ENCODE measurements at regions of chr17 and their contacts with region 1.

Region 1: GRCh38 chr17:32444308-32445073 is at the start of gene PSMD11:
- DNase-seq: peak; percentile 99
- ATAC-seq: peak; percentile 96
- H3K4me3 Mint-ChIP-seq: peak within 1 kb of the TSS; percentile 82
- H3K27ac Mint-ChIP-seq: peak within 1 kb of the TSS; percentile 90
- H3K4me1 Mint-ChIP-seq: peaks cover 40% of the 10 kb centered on the region
- H3K27me3 Mint-ChIP-seq: peaks cover 15% of the 10 kb centered on the region
- total RNA-seq, gene PSMD11: 110 to 139 TPM

Region 2: GRCh38 chr17:32429598-32429997 is 14.9 kb before region 1 on chr17:
- CTCF ChIA-PET with region 1: interaction called, 10 read pairs
- DNase-seq: no peak
- ATAC-seq: no peak
- H3K4me3 Mint-ChIP-seq: no peak overlapping the region
- H3K27ac Mint-ChIP-seq: no peak overlapping the region
- H3K4me1 Mint-ChIP-seq: no peaks in the 10 kb centered on the region
- H3K27me3 Mint-ChIP-seq: no peaks in the 10 kb centered on the region

Region 3: DNA sequence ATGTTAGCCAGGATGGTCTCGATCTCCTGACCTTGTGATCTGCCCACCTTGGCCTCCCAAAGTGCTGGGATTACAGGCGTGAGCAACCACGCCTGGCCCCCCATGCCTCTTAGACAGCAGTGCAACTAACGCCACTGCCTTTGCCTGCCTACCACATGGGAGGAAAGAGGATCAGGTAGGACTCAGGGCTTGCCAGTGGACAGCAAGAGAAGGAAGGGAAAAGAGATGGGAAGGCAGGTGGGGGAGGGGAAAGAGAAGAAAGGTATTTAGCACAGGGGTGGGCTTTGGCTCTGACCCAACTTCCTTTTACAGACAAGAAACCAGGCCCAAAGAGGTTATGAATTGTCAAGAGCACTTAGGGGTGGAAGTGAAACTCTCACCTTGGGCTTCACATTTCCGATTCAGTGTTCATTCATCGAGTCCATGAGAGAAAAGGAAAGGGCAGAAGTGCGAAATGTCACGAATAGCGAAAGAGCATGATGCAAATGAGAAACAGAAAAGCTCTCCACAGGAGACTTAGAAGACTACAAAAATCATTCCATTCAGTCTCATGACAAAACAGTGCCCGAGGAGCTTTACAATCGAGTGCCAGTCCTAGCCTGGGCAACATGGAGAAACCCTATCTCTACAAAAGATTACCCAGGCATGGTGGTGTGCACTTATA is 78.7 kb after region 1 on chr17:
- CTCF ChIA-PET with region 1: interaction called, 12 read pairs
- DNase-seq: peak; percentile 80
- ATAC-seq: peak; percentile 64
- H3K4me3 Mint-ChIP-seq: peak overlapping the region; percentile 48
- H3K27ac Mint-ChIP-seq: peak overlapping the region; percentile 88
- H3K4me1 Mint-ChIP-seq: peaks cover 61% of the 10 kb centered on the region
- H3K27me3 Mint-ChIP-seq: peaks cover 19% of the 10 kb centered on the region

Region 4: DNA sequence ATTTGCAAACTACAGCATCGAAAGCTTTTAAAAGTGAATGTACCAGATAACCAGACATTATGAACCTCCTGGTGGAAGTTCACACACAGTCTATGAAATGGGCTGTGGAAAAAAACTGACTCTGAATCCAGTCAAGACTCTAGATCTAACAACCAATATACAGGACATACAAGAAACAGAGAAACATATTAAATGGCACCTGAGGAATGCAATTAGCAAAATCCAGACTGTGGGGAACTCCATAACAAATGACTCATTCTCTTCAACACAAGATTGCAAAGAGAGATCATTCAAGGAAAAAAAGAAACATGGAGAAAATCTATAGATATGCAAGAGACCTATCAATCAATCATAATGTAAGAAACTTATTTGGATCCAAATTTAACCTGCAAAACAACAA is 313.5 kb after region 1 on chr17:
- CTCF ChIA-PET with region 1: no interaction called
- DNase-seq: no peak
- ATAC-seq: no peak
- H3K4me3 Mint-ChIP-seq: no peak overlapping the region
- H3K27ac Mint-ChIP-seq: no peak overlapping the region
- H3K4me1 Mint-ChIP-seq: peaks cover 6% of the 10 kb centered on the region
- H3K27me3 Mint-ChIP-seq: no peaks in the 10 kb centered on the region

Measured in activated CD8-positive, alpha-beta memory T cell treated with anti-CD3 and anti-CD28 coated beads, Interleukin-2, amount 10 ng/mL, durations not matched to agents 7 days and 5 days (primary cell).